Activated naive CD4-positive, alpha-beta T cell treated with anti-CD3 and anti-CD28 coated beads, Interleukin-2, amount 10 ng/mL, durations not matched to agents 7 days and 5 days (primary cell): ENCODE measurements at regions of chr1 and their contacts with region 1.

Region 1: GRCh38 chr1:2523191-2523890 is 3.1 kb downstream of the PANK4 start:
- DNase-seq: peak; percentile 55
- H3K4me3 Mint-ChIP-seq: peak overlapping the region; percentile 89
- H3K27ac Mint-ChIP-seq: peak overlapping the region; percentile 99
- H3K4me1 Mint-ChIP-seq: peaks cover 41% of the 10 kb centered on the region
- H3K27me3 Mint-ChIP-seq: peaks cover 17% of the 10 kb centered on the region

Region 2: GRCh38 chr1:2412519-2413233 is 110.7 kb before region 1 on chr1 and contains the start of gene PEX10:
- CTCF ChIA-PET with region 1: interaction called, 11 read pairs
- DNase-seq: peak; percentile 99
- H3K4me3 Mint-ChIP-seq: peak within 1 kb of the TSS; percentile 84
- H3K27ac Mint-ChIP-seq: peak within 1 kb of the TSS; percentile 90
- H3K4me1 Mint-ChIP-seq: peaks cover 46% of the 10 kb centered on the region
- H3K27me3 Mint-ChIP-seq: no peaks in the 10 kb centered on the region

Region 3: GRCh38 chr1:3060601-3061551 is 537.5 kb after region 1 on chr1:
- CTCF ChIA-PET with region 1: no interaction called
- DNase-seq: peak; percentile 8
- H3K4me3 Mint-ChIP-seq: no peak overlapping the region
- H3K27ac Mint-ChIP-seq: no peak overlapping the region
- H3K4me1 Mint-ChIP-seq: no peaks in the 10 kb centered on the region
- H3K27me3 Mint-ChIP-seq: peaks cover 44% of the 10 kb centered on the region